RWPE1 (cell line): ENCODE measurements at regions of chr1 and their contacts with region 1.

Region 1: DNA sequence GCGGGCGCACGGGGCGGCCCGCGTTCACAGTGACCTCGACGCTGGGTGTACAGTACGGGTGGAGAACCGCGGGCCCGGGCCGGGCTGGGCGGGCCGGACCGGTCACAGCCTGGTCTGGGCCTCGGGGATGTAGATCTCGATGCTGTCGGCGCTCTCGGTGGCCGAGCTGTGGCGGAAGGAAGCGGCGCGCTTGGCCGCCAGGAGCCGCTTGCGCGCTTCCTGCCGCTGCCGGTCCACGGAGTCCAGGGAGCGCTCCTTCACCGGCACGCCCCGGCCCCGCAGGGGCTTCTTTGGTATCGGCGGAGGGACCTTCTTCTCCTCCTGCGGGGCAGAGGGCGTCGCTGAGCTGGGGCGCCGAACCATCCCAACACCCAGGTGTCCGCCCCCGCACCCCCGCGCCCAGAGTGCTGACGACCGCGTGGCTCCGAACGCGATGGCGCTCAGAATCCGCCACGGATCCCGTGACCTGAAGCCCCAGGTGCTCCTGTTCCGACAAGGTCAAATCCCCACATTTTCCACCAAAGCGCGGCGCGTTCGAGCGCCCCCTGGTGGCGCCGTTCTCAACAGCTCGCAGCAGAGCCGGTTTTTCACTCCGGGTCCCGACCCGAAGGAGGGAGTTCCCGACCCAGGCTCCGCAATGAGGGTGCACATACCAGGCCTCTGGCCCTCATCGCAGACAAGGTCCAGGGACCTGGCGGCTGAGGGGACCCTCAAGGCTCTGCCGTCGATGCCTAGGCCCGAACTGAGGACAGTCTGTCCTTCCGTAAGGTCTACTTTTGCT is 6.6 kb upstream of the SMIM12 start:
- DNase-seq: peak; percentile 72
- H3K27ac ChIP-seq: peak overlapping the region; percentile 77
- CTCF ChIP-seq: peak; percentile 90

Region 2: DNA sequence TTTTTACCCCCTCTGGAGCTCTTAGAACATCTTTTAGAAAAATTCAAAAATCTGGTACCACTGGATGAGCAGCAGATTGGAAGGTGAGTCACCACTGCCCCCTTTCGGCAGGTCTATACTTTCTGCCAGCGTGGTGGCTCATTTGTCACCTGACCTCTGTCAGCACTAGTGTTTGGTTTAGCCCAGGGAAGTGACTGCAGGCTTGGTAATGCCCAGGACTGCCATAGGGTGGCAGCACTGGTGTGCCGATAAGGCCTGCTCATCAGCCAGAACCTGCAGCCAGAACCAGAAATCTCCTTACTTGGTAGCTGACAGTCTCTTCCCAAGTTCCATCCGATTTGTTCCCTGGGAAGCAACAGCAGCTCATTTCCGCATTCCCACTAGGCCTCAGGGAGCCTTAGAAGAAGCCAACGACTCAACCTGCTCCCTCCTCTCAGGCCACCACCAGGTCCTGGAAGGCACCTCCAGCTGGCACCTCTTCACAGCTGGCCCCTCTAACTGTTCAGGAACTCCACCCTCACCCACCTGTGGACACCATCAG is 13.4 kb before region 1 on chr1:
- CTCF ChIA-PET with region 1: interaction called, 10 read pairs
- POLR2A ChIA-PET with region 1: no interaction called
- DNase-seq: peak; percentile 88
- H3K27ac ChIP-seq: peak overlapping the region; percentile 59
- CTCF ChIP-seq: peak; percentile 93